ENCODE measurements at regions of chr17 and their contacts with region 1.

Region 1: GRCh38 chr17:5584383-5585286 is at the start of gene NLRP1:
- DNase-seq: peak; percentile 93
- ATAC-seq: peak; percentile 92
- total RNA-seq, gene NLRP1: 7.9 TPM

Region 2: DNA sequence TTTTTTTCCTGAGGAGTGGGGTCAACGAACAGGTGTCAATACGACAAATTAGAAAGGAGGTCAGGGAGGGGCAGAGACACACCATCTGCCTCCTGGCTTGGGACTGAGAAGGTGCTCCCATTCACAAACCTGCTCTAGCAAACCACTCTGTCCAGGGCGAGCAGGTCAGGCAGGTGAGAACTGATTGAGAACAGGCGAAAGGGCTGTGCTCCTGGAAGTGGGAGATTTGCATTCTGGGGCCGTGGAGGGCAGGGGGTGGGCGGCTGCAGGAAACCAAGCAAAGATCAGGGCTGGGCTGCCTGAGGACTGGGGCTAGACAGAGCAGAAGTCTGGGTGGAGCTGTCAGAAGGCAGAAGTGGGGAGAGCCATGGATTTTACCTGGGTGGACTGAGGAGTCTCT is 98.6 kb after region 1 on chr17:
- intact Hi-C with region 1: no loop called
- DNase-seq: no peak
- ATAC-seq: no peak

Region 3: GRCh38 chr17:6421700-6422604 is 837.3 kb after region 1 on chr17:
- intact Hi-C with region 1: loop called (anchors 2 kb)
- DNase-seq: peak; percentile 82
- ATAC-seq: peak; percentile 88

Region 4: GRCh38 chr17:6435968-6436367 is 851.3 kb after region 1 on chr17:
- intact Hi-C with region 1: loop called (anchors 5 kb)
- DNase-seq: no peak
- ATAC-seq: peak; percentile 90

Measured in Right ventricle myocardium superior (tissue), 1 donor.